Right cardiac atrium (tissue), 5 donors: ENCODE measurements at regions of chrX and their contacts with region 1.

Region 1: DNA sequence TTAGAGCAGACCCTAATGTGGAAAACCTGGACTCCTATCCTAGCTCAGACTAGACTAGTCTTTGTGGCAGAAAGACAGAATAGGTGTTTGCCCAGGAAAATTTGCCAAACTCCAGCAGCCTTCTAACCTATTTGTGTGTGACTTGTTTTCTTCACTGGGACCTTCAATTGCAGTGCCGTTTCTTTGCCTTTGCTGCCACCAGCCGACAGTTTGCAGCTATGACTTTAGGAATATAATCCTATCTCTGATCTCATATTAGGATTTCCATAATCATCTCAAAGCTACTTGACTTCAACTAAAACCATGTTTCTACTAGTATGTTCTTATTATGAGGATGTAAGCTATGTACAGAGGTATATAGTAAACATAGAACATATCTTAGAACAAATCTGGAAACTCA is 60.2 kb upstream of the PGAM4 start:
- DNase-seq: no peak
- ATAC-seq: no peak
- H3K4me3 ChIP-seq: no peak overlapping the region
- H3K27ac ChIP-seq: no peak overlapping the region
- H3K4me1 ChIP-seq: no peaks in the 10 kb centered on the region
- H3K27me3 ChIP-seq: no peaks in the 10 kb centered on the region

Region 2: DNA sequence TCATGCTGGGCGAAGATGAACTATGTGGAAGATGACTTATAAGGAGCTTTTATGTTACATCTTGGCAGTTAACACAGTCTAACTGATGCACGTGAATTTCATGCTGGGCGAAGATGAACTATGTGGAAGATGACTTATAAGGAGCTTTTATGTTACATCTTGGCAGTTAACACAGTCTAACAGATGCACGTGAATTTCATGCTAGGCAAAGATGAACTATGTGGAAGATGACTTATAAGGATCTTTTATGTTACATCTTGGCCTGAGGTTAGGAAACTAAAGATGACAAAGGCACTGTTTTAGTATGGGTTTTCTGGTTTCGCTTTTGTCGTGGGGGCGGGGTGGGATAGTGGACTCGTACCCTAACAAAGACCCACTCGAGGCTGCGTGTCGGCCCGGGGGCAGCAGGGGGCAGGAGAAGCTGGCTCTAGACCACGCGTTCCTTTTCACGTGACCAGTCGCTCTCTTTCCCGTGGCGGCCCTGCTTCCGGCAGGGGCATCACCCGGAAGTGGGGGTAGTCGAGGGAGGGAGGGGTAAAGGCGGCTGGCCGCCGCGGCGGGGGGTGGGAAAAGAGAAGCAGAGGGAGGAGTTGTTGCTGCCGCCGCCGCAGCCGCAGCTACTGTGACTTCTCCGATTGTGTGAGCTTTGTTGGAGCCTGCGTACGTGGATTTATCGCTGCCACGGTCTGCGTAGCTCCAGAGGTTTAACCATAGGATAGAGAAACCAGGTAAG is 119.4 kb before region 1 on chrX and contains the start of gene ATP7A:
- intact Hi-C with region 1: loop called in 1 of 4 experiments (anchors 10 kb)
- DNase-seq: peak; percentile 89 to 95 (median 94)
- ATAC-seq: peak; percentile 98
- H3K4me3 ChIP-seq: peak within 1 kb of the TSS; percentile 96
- H3K27ac ChIP-seq: peak within 1 kb of the TSS; percentile 95
- H3K4me1 ChIP-seq: no peaks in the 10 kb centered on the region
- H3K27me3 ChIP-seq: no peaks in the 10 kb centered on the region
- total RNA-seq, gene ATP7A: 6.7 to 11.5 (median 7.8) TPM

Region 3: DNA sequence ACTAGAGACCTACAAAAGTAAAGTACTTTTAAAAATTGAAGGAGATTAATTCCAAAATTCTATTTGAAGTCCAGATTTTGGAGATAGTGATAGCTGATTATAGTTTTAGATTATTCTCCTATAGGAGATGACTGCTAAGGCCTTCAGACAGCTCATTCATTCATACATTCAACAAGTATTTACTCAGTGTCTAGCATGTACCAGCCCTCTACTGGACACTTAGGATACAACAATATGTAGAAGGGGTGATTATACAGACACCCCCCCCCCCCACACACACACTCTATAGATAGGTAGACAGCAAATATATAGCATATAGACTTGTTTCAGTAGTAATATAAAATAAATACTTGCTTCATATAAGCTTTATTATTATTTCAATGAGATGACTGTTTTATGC is 170.2 kb after region 1 on chrX:
- intact Hi-C with region 1: no loop called
- DNase-seq: no peak
- ATAC-seq: no peak
- H3K4me3 ChIP-seq: no peak overlapping the region
- H3K27ac ChIP-seq: no peak overlapping the region
- H3K4me1 ChIP-seq: no peaks in the 10 kb centered on the region
- H3K27me3 ChIP-seq: no peaks in the 10 kb centered on the region